Testis (tissue), 5 donors: ENCODE measurements at regions of chr6 and their contacts with region 1.

Region 1: DNA sequence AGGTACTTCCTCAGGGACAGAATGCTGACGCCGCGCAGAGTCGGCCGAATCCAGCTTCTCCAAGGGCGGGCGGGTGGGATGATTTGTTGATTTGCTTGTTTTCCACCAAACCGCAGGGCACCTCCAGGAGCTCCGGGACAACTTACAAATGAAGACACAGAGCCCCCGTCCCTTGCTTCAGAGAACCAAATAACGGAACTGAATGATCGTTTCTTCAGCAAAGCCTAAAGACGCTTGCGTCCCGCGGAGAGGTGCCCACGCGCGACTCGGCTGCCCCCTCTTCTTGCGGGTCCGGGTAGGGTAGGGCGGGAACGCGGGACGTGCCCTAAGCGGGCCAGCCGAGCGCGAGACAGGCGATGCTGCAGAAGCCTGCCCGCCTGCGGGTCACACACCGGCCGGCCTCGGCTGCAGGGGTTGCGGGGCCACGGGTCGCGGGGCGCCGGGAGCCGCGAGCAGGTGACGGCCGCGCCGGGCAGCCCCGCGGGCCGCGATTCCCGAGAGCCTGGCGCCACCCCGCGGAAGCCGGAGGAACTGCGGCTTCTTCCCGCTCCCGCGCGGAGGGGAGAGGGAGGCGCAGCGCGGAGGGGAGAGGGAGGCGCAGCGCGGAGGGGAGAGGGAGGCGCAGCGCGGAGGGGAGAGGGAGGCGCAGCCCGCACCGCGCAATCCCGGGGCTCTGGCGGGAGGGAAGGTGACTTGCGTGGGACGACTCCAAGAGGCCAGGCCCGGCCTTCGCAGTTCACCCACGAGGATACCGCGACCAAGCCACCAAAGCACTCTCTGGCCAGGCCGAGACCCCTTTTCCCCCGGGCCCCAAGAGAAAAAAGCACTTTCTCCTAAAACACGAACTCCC is 7.7 kb upstream of the FOXF2 start:
- DNase-seq: peak; percentile 69
- H3K4me3 ChIP-seq: peak overlapping the region; percentile 34 to 36
- H3K27ac ChIP-seq: no peak overlapping the region
- H3K4me1 ChIP-seq: peaks cover 17% of the 10 kb centered on the region
- H3K27me3 ChIP-seq: no peaks in the 10 kb centered on the region
- CTCF ChIP-seq: peak; percentile 88 to 91 (median 89)
- POLR2A ChIP-seq: no peak

Region 2: DNA sequence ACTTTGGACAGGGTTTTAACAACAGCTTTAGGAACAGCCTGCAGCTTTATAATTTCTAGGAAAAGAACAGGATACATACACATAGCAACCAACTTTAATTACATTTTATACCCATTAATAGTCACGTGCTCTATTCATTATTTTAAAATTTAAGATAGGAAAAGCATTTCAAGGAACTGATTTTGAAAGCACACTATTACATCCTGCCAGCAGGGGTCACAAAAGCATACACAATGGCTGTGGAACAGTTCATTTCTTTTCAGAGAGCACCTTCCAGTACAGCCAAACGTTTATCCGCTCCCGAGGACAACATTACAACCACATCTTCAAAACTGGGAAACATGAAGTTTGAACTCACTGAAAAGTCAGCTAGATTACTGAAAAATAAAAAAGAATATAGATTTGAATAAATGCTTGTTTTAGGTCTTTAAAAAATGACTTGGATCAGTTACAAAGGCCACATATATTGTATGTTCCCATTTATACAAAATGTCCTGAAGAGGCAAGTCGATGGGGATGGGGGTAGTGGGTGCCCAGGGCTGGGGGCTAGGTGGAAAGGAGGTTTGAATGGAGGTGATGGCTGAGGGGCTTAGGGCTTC is 584.1 kb before region 1 on chr6:
- intact Hi-C with region 1: loop called (anchors 5 kb)
- DNase-seq: peak; percentile 69
- H3K4me3 ChIP-seq: no peak overlapping the region
- H3K27ac ChIP-seq: no peak overlapping the region
- H3K4me1 ChIP-seq: no peaks in the 10 kb centered on the region
- H3K27me3 ChIP-seq: no peaks in the 10 kb centered on the region
- CTCF ChIP-seq: peak; percentile 70 to 76 (median 76)
- POLR2A ChIP-seq: no peak

Region 3: GRCh38 chr6:1418471-1419191 is 36.9 kb after region 1 on chr6:
- intact Hi-C with region 1: no loop called
- DNase-seq: no peak
- H3K4me3 ChIP-seq: no peak overlapping the region
- H3K27ac ChIP-seq: no peak overlapping the region
- H3K4me1 ChIP-seq: no peaks in the 10 kb centered on the region
- H3K27me3 ChIP-seq: no peaks in the 10 kb centered on the region
- CTCF ChIP-seq: no peak
- POLR2A ChIP-seq: no peak